GM18951 (cell line): ENCODE measurements at regions of chr7 and their contacts with region 1.

Region 1: DNA sequence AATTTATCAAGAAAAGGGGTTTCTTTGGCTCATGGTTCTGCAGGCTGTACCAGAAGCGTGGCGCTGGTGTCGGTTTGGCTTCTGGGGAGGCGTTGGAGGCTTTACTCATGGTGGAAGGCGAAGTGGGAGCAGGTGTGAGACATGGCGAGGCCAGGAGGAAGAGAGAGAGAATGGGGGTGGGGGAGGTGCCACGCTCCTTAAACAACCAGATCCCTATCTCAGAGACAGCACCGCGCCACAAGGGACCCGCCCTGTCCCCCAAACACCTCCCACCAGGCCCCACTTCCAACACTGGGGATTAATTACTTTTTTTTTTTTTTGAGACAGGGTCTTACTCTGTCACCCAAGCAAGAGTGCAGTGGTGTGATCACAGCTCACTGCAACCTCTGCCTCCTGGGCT is 18.0 kb upstream of the SH2B2 start:
- POLR2A ChIP-seq: no peak

Region 2: DNA sequence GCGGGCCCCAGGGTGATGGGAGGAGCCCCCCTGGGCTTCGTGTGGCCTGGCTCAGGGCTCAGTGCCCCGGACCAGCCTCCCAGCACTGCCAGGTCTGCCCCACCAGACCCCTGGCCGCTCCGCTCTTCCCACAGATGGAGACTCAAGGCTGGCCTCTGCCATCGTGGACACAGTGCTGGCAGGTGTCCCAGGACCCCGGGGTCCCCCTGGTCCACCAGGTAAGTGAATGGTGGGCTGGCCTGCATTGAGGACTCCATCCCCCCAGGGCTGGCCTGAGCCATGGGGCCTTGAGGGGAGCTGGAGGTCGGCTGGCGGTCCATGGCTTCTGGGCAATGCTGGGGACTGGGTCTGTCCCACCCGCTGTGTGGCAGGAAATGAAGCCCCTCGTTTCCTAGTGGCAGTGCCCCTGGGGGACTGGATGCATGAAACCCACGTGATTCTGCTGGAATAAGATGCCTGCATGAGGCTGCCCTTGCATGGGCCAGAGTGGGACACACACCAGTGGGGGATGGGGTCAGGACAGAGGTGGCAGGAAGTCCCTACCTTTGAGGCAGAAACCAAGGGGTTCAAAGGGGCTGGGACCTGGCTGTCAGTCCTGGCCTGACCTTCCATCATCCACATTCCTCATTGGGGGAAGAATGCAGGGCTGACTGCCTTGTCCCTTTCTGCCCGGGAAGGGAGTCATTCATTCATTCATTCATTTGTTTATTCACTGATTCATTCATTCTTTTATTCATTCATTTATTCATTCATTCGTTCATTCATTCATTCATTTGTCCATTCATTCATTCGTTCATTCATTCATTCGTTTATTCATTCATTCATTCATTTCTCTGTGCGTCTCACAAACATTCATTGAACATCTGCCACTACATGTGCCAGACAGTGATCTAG is 721.4 kb before region 1 on chr7:
- in situ Hi-C with region 1: loop called (anchors 5 kb)
- POLR2A ChIP-seq: no peak